MCF 10A (cell line): ENCODE measurements at regions of chr18 and their contacts with region 1.

Region 1: GRCh38 chr18:49510393-49511115 is 23.5 kb upstream of the C18orf32 start:
- DNase-seq: peak; percentile 66
- H3K4me3 Mint-ChIP-seq: no peak overlapping the region
- H3K27ac Mint-ChIP-seq: no peak overlapping the region
- H3K4me1 Mint-ChIP-seq: no peaks in the 10 kb centered on the region
- H3K27me3 Mint-ChIP-seq: peaks cover 25% of the 10 kb centered on the region
- CTCF ChIP-seq: peak; percentile 80

Region 2: GRCh38 chr18:49392352-49392751 is 118.2 kb before region 1 on chr18:
- CTCF ChIA-PET with region 1: no interaction called
- POLR2A ChIA-PET with region 1: no interaction called
- intact Hi-C with region 1: no loop called
- DNase-seq: no peak
- H3K4me3 Mint-ChIP-seq: no peak overlapping the region
- H3K27ac Mint-ChIP-seq: no peak overlapping the region
- H3K4me1 Mint-ChIP-seq: no peaks in the 10 kb centered on the region
- H3K27me3 Mint-ChIP-seq: no peaks in the 10 kb centered on the region
- CTCF ChIP-seq: no peak

Region 3: GRCh38 chr18:49500201-49500921 is 10.2 kb before region 1 on chr18:
- CTCF ChIA-PET with region 1: interaction called, 13 read pairs
- POLR2A ChIA-PET with region 1: no interaction called
- intact Hi-C with region 1: no loop called
- DNase-seq: no peak
- H3K4me3 Mint-ChIP-seq: no peak overlapping the region
- H3K27ac Mint-ChIP-seq: no peak overlapping the region
- H3K4me1 Mint-ChIP-seq: peaks cover 5% of the 10 kb centered on the region
- H3K27me3 Mint-ChIP-seq: no peaks in the 10 kb centered on the region
- CTCF ChIP-seq: no peak

Region 4: DNA sequence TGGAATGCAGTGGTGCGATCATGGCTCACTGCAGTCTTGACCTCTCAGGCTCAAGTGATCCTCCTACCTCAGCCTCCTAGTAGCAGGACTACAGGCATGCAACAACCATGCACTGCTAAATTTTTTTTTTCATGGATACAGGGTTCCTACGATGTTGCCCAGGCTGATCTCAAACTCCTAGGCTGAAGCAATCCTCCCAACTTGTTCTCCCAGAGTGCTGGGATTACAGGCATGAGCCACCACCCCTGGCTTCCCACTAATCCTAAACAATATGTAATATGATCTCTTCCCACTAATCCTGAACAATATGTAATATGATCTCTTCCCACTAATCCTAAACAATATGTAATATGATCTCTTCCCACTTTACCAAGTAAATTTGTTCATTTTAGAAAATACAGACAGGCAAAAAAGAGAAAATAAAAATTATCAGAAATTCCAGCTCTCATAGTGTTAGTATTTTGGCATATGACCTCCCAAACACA is 10.1 kb after region 1 on chr18:
- CTCF ChIA-PET with region 1: interaction called, 19 read pairs
- POLR2A ChIA-PET with region 1: no interaction called
- intact Hi-C with region 1: no loop called
- DNase-seq: peak; percentile 60
- H3K4me3 Mint-ChIP-seq: no peak overlapping the region
- H3K27ac Mint-ChIP-seq: no peak overlapping the region
- H3K4me1 Mint-ChIP-seq: peaks cover 10% of the 10 kb centered on the region
- H3K27me3 Mint-ChIP-seq: no peaks in the 10 kb centered on the region
- CTCF ChIP-seq: no peak

Region 5: GRCh38 chr18:49768051-49768391 is 257.5 kb after region 1 on chr18:
- CTCF ChIA-PET with region 1: interaction called, 21 read pairs
- POLR2A ChIA-PET with region 1: interaction called, 3 read pairs
- intact Hi-C with region 1: loop called (anchors 2 kb)
- DNase-seq: peak; percentile 62
- H3K4me3 Mint-ChIP-seq: no peak overlapping the region
- H3K27ac Mint-ChIP-seq: no peak overlapping the region
- H3K4me1 Mint-ChIP-seq: no peaks in the 10 kb centered on the region
- H3K27me3 Mint-ChIP-seq: no peaks in the 10 kb centered on the region
- CTCF ChIP-seq: peak; percentile 82

Region 6: GRCh38 chr18:49784427-49785185 is 274.1 kb after region 1 on chr18:
- CTCF ChIA-PET with region 1: interaction called, 25 read pairs
- POLR2A ChIA-PET with region 1: interaction called, 3 read pairs
- intact Hi-C with region 1: loop called (anchors 5 kb)
- DNase-seq: no peak
- H3K4me3 Mint-ChIP-seq: no peak overlapping the region
- H3K27ac Mint-ChIP-seq: no peak overlapping the region
- H3K4me1 Mint-ChIP-seq: peaks cover 14% of the 10 kb centered on the region
- H3K27me3 Mint-ChIP-seq: no peaks in the 10 kb centered on the region
- CTCF ChIP-seq: peak; percentile 31

Region 7: DNA sequence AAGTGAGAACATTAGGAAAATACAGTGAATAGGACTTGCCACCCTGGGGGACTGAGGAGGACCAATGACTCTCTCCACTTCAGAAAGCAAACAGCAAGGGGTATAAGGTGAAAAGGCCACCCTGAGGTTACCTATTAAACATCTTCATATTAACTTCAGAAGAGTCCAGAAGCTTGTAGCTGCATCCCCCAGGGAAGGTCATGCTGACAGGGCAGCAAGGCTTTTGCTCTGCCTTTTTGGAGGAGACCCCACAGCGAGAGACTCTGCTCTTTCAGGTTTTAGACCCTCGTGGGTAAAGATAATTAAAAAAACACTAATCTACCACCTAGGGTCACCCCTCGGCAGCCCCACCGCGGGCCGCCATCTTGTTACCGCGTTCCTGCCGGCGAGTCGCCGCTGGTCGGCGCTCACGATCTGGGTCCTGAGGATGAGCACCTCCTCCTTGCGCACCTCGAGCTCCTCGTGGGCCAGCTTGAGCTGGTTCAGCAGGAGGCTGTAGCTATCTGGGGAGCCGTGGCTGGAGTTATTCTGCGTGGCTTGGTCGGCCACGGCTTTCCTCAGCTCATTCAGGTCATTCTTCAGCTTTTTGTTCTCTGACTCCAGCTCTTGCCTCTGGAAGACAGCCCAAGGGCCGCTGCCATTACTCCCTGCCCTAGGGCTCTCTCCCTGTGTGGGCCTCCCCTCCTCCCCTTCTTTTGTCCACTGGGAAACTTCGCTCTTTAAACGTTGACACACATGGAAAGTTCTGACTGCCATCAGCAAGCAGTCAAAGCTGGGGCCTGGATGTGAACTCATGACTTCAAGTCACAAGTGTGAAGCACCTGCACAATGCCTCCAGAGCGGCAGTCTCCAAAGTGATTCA is 353.4 kb after region 1 on chr18:
- CTCF ChIA-PET with region 1: interaction called, 52 read pairs
- POLR2A ChIA-PET with region 1: no interaction called
- intact Hi-C with region 1: no loop called
- DNase-seq: no peak
- H3K4me3 Mint-ChIP-seq: no peak overlapping the region
- H3K27ac Mint-ChIP-seq: no peak overlapping the region
- H3K4me1 Mint-ChIP-seq: no peaks in the 10 kb centered on the region
- H3K27me3 Mint-ChIP-seq: no peaks in the 10 kb centered on the region
- CTCF ChIP-seq: no peak

Region 8: DNA sequence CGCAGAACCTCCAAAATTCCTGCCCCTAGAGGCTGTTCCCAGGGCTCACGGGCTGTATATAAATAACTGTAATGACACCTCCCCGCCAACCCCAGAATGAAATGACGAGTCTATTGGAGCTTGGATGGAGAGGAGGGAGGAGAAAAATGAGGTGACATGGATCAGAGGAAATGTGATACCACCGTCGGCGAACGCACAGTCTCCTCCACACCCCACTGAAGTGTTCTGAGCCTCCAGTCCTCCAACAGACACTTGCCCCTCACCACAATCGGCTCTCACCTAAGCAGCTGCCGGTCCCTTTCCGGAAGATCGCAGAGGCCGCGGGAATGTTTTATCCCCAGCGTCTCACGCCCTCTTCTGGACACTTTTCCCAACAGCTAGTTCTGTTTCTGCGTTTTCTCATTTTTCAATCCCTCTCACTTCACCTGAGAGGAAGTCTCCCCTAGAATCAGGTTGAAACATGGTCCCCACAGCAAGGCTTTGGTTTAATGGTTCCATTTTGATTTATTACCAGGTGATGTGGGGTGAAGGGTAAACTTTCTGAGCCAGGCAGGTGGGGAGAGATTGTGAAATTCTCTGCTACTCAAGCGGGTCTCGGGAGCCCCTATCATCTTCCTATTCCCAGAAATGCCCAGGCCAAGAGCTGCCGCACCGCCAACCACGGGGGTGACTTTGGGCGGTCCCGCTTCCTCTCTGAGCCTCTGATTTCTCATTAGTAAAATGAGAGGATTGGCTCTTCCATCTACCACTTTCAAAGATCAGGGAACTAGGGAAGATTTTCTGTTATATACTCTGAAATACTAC is 693.4 kb after region 1 on chr18:
- CTCF ChIA-PET with region 1: interaction called, 4 read pairs
- POLR2A ChIA-PET with region 1: no interaction called
- intact Hi-C with region 1: loop called (anchors 5 kb)
- DNase-seq: peak; percentile 70
- H3K4me3 Mint-ChIP-seq: peak overlapping the region; percentile 37
- H3K27ac Mint-ChIP-seq: no peak overlapping the region
- H3K4me1 Mint-ChIP-seq: no peaks in the 10 kb centered on the region
- H3K27me3 Mint-ChIP-seq: peaks cover 11% of the 10 kb centered on the region
- CTCF ChIP-seq: peak; percentile 68